ENCODE measurements at regions of chr19 and their contacts with region 1.

Region 1: DNA sequence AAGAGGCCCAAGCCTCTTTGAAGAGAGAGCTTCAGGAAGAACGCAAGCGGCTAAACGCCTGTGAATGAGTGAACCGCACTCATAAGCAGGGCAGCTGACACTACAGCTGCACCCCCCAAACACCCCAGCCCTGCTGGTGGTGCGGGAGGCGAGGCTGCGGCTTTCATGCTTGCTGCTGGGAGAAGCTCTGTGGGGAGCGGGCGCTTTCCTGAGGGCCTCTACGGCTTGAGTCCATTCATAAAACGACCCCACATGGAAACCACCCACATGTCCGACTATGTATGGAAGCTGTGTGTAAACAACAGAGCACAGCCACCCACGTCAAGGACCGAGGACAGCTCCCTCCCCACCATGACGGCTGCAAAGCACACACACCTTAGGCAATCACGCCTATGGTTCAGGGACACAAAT is 5.5 kb downstream of the AP3D1 start:
- DNase-seq: no peak
- ATAC-seq: no peak
- H3K4me3 Mint-ChIP-seq: no peak overlapping the region
- H3K27ac Mint-ChIP-seq: peak overlapping the region; percentile 93
- H3K4me1 Mint-ChIP-seq: peaks cover 27% of the 10 kb centered on the region
- H3K27me3 Mint-ChIP-seq: no peaks in the 10 kb centered on the region
- CTCF ChIP-seq: no peak

Region 2: DNA sequence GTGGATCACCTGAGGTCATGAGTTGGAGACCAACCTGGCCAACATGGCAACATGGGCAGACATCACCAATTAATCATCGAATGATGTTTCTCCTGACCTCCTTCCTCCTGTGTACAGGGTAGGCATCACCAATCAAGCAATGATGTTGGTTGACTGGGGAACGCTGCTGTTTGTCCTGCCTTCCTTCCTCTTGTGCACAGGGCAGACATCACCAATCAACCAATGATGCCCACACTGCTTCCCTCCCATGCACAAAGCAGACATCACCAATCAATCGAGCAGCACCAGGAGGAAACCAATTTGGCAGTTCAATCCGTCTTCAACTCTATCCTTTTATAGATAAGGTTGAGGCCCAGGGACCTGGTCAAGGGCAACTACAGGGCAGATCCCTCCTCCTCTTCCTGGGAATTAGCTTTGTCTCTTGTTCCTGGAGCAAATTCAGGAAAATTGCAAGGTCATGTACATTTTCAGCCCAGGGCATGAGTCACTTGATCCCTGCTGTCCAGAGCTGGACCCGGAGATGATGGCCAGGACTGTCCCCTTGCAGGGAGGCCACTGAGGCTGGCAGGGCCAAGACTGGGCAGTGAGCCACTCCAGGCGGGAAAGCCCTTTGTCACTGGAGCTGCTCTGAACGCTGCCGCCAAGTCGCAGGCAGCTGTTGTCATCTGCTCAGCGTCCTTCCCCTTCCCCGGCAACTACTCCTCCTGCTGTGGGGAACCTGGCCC is 210.2 kb before region 1 on chr19:
- CTCF ChIA-PET with region 1: no interaction called
- POLR2A ChIA-PET with region 1: interaction called, 10 read pairs
- DNase-seq: no peak
- ATAC-seq: peak; percentile 29; the same call in 1 of the 2 replicates
- H3K4me3 Mint-ChIP-seq: no peak overlapping the region
- H3K27ac Mint-ChIP-seq: peak overlapping the region; percentile 11; the same call in 1 of the 2 replicates
- H3K4me1 Mint-ChIP-seq: peaks cover 9% of the 10 kb centered on the region
- H3K27me3 Mint-ChIP-seq: peaks cover 19% of the 10 kb centered on the region
- CTCF ChIP-seq: no peak